Activated naive CD4-positive, alpha-beta T cell treated with anti-CD3 and anti-CD28 coated beads for 36 hours (primary cell): ENCODE measurements at regions of chr21 and their contacts with region 1.

Region 1: GRCh38 chr21:46425571-46425970 is 33.1 kb upstream of the DIP2A start:
- DNase-seq: peak; percentile 66
- H3K4me3 Mint-ChIP-seq: no peak overlapping the region
- H3K27ac Mint-ChIP-seq: peak overlapping the region; percentile 84
- H3K4me1 Mint-ChIP-seq: peaks cover 17% of the 10 kb centered on the region
- H3K27me3 Mint-ChIP-seq: no peaks in the 10 kb centered on the region

Region 2: DNA sequence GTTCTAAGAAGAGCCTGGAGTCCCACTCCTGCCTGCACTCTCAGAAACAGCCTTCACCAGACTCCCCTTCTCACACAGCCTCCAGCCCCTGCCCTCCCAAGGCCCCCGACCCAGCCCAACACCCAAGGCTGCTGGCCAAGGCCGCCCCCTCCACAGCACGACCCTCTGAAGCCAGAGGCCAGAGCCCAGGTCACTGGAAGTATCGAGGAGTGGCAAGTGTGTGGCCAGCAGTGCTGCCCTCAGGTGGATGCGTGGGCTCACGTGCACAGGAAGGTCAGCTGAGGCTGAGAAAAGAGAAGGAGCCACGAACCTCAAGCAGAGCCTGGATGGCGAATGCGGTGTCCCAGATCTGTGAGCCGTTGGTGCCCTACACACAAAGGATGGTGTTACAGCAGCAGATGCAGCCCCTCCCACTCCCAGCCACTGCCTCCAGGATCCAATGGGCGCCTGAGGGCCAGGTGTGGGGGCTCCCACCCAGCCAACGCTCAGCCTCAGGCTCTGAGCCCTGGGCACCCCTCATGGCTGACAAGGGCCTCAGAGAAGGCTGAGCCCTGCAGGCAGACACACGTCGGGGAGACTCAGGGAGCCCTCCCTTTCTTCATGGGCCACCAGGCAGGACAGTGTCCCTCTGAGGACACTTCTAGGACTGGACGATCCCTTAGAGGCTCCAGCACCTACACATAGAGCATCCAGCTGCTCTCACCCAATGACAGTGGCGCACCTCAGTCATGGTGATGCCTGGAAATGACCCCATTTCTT is 215.0 kb before region 1 on chr21:
- CTCF ChIA-PET with region 1: no interaction called
- intact Hi-C with region 1: no loop called
- DNase-seq: no peak
- H3K4me3 Mint-ChIP-seq: no peak overlapping the region
- H3K27ac Mint-ChIP-seq: no peak overlapping the region
- H3K4me1 Mint-ChIP-seq: no peaks in the 10 kb centered on the region
- H3K27me3 Mint-ChIP-seq: no peaks in the 10 kb centered on the region

Region 3: DNA sequence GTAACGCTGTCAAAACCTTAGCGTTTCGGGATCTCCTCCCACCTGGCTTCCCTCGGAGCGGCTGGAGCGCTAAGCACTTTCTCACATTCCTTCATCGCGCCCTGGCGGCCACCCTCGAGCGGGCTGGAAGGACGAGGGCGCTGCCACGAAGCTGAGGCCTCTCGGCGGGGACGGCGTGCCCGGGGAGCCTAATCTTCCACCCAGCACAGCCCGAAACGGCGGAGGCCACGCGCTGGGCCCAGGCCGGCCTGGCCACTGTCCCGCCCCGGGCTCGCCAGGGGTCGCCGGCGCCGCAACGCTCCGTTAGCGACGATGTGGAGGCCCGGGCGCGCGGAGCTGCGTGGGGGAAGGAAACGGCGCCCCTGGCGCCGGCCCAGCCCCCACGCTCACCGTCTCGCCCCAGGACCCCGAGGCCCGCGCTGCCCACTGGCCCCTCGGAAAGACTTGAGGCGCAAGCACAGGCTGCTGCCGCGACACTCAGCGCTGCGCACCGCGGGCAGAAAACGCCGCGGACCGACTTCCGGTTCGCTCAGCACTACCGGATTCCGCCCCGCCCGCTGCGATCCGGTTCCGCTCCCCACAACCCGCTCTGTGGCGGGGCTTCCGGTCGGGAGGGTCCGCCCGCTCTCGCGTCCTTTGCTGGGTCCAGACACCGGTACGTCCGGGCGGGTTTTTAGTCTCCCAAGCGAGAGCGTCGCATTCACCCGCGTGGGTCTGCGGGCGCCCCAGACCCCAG is 139.6 kb before region 1 on chr21 and contains the start of gene YBEY:
- CTCF ChIA-PET with region 1: no interaction called
- intact Hi-C with region 1: loop called (anchors 1 kb)
- DNase-seq: peak; percentile 89
- H3K4me3 Mint-ChIP-seq: peak within 1 kb of the TSS; percentile 98
- H3K27ac Mint-ChIP-seq: peak within 1 kb of the TSS; percentile 96
- H3K4me1 Mint-ChIP-seq: peaks cover 59% of the 10 kb centered on the region
- H3K27me3 Mint-ChIP-seq: no peaks in the 10 kb centered on the region
- total RNA-seq, gene YBEY: 9.9 to 11.0 TPM

Region 4: DNA sequence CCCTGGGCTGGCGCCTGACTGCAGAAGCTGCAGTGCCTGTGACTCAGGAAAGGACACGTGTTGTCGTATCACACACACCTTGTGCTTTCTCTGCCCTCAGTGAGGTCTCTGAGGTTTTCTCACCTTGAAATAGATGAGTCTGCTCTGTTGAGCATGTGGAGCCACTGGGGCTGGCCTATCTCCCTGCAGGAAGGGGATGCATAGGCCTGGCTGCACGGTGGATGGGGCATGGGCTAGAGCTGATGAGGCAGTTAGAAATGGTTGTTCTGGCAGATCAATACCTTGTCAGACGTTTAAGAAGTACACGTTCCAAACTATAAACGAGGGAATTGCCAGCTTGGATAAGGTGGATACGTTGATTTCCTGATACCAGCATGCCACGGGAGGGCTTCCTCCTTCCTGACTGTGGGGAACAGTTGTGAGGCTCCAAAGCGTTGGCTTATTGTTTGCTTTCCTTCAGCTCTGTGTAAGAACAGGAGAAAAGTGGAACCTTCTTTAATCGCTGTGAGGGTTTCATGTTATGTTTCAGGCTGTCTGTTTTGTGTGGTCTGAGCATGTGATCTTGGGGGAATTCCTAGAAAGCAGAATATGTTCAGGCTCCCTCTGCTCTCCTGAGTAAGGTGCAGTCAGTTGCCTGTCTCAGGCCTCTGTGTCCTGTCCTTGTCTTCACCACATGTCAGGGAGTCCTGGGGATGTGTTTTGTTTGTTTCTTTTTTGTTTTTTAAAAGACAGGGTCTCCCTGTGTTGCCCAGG is 56.9 kb before region 1 on chr21:
- CTCF ChIA-PET with region 1: no interaction called
- intact Hi-C with region 1: loop called (anchors 2 kb)
- DNase-seq: peak; percentile 75
- H3K4me3 Mint-ChIP-seq: peak overlapping the region; percentile 38
- H3K27ac Mint-ChIP-seq: peak overlapping the region; percentile 65
- H3K4me1 Mint-ChIP-seq: peaks cover 20% of the 10 kb centered on the region
- H3K27me3 Mint-ChIP-seq: no peaks in the 10 kb centered on the region

Region 5: DNA sequence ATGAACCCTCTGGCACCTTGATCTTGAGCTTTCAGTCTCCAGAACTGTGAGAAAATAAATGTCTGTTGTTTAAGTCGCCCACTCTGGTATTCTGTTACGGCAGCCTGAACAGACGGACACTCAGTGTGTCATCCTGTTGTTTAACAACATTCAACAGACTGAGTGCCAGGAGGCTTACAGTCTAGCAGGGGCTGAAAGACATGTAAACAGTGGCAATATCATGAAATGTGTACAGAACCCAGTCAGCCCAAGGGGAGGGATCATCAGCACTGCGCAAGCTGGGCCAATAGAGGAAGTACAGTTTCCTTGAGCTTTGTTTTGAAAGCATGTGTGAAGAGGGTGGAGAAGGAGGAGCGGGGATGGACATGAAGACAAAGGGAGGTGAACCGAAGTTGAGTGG is 46.7 kb after region 1 on chr21:
- CTCF ChIA-PET with region 1: no interaction called
- intact Hi-C with region 1: no loop called
- DNase-seq: no peak
- H3K4me3 Mint-ChIP-seq: no peak overlapping the region
- H3K27ac Mint-ChIP-seq: no peak overlapping the region
- H3K4me1 Mint-ChIP-seq: peaks cover 44% of the 10 kb centered on the region
- H3K27me3 Mint-ChIP-seq: no peaks in the 10 kb centered on the region

Region 6: GRCh38 chr21:46551636-46552241 is 126.2 kb after region 1 on chr21:
- CTCF ChIA-PET with region 1: no interaction called
- intact Hi-C with region 1: no loop called
- DNase-seq: peak; percentile 65
- H3K4me3 Mint-ChIP-seq: peak overlapping the region; percentile 60
- H3K27ac Mint-ChIP-seq: peak overlapping the region; percentile 76
- H3K4me1 Mint-ChIP-seq: peaks cover 41% of the 10 kb centered on the region
- H3K27me3 Mint-ChIP-seq: no peaks in the 10 kb centered on the region